ENCODE measurements at regions of chr3 and their contacts with region 1.

Region 1: DNA sequence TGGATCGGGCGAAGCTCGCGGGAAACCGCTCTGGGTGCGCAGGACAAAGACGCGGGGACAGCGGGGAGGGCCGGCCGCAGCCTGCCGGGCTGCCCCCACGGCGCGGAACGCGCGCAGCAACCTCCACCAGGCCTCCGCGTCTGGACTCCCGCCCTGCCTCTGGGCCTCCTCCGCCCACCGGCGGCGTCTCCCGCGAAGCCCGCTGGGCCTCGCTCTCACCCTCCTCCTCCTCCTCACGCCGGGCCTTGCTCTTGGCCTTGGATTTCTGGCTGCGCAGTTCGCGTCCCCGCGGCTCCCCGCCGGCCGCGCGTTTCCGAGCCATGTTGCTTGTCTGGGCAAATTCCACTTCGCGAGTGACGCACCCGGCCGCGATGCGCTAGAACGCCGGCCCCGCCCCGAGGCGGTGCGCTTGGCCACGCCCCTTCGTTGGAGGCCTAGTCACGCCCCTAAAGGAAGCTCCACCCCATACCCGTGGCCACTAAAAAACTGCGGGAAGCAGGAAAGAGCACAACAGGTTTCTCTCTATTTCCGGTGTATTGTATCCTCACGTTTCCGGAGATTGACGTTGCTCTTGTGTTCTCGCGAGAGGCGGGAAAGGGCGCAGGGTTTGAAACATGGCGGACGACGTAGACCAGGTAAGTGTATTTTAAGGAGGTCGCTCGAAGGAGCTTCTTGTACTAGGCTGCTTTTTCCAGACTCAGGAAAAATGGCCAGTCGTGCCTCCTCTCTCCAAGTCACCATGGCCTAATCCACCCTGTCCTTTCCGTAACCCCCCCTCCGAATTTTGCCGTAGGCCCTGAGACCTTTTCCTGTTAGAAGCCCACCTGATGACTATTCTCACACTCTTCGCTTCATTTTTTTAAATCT is at the starts of genes LSM3 and XPC:
- DNase-seq: peak; percentile 98
- ATAC-seq: peak; percentile 93
- H3K4me3 Mint-ChIP-seq: peak within 1 kb of the TSS; percentile 79
- H3K27ac Mint-ChIP-seq: peak within 1 kb of the TSS; percentile 94
- H3K4me1 Mint-ChIP-seq: peaks cover 64% of the 10 kb centered on the region
- H3K27me3 Mint-ChIP-seq: no peaks in the 10 kb centered on the region
- total RNA-seq, gene LSM3: 23.0 to 30.2 TPM
- total RNA-seq, gene XPC: 24.3 to 24.7 TPM

Region 2: DNA sequence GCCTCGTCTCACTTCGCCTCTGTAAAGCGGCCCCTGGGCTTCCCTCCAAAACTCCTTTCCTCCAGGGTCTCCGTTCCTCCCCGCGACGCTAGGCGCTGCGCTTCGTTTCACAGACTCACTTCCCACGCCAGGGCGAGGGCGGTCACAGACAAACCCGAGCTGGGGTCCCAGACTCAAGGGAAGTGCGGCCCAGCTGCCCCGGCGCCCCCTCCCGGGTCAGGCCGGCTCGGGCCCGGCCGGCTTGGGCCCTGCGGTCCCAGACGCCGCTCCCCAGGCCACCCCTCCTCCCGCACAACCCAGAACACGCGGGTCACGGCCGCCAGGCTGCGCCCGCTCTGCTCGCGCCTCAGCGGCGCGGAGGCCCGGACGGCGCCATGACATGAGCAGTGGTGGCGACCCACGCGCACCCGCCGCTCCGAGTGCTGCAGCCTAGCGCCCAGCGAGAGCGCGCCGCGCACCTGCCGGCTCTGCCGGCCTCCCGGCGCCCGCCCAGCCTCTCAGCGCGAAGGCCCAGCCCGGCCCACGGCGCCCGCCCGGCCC is 758.9 kb before region 1 on chr3:
- CTCF ChIA-PET with region 1: no interaction called
- POLR2A ChIA-PET with region 1: no interaction called
- intact Hi-C with region 1: loop called in 1 of 2 experiments (anchors 10 kb)
- DNase-seq: peak; percentile 79
- ATAC-seq: peak; percentile 30
- H3K4me3 Mint-ChIP-seq: peak overlapping the region; percentile 77
- H3K27ac Mint-ChIP-seq: peak overlapping the region; percentile 95
- H3K4me1 Mint-ChIP-seq: peaks cover 58% of the 10 kb centered on the region
- H3K27me3 Mint-ChIP-seq: no peaks in the 10 kb centered on the region

Region 3: GRCh38 chr3:14124615-14125190 is 53.8 kb before region 1 on chr3 and contains the starts of genes CHCHD4 and TMEM43:
- CTCF ChIA-PET with region 1: interaction called, 5 read pairs
- POLR2A ChIA-PET with region 1: interaction called, 34 read pairs
- intact Hi-C with region 1: loop called (anchors 1 kb)
- DNase-seq: peak; percentile 99
- ATAC-seq: peak; percentile 91
- H3K4me3 Mint-ChIP-seq: peak within 1 kb of the TSS; percentile 96
- H3K27ac Mint-ChIP-seq: peak within 1 kb of the TSS; percentile 90
- H3K4me1 Mint-ChIP-seq: peaks cover 64% of the 10 kb centered on the region
- H3K27me3 Mint-ChIP-seq: no peaks in the 10 kb centered on the region
- total RNA-seq, gene CHCHD4: 23.3 TPM
- total RNA-seq, gene TMEM43: 28.3 to 28.5 TPM

Region 4: DNA sequence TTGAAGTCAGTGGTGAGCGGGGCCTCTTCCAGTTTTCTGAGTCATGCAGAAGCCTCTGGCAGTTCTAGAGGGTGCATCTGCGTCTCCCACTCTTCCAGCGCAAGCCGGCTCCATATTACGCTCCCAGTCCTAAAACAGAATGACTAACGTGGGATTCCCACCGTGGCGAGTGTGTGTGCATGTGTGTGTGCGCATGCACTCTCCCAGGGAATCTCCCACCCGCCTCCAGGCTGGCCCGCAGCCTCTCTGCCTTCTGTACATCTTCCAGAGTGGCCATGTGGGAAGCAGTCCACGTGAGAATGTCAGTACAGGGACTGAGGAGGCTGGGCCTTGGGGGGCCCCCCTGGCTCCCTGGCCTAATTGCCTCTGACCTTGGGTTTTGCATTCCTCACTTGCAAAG is 87.9 kb after region 1 on chr3:
- CTCF ChIA-PET with region 1: no interaction called
- POLR2A ChIA-PET with region 1: no interaction called
- intact Hi-C with region 1: no loop called
- DNase-seq: no peak
- ATAC-seq: no peak
- H3K4me3 Mint-ChIP-seq: no peak overlapping the region
- H3K27ac Mint-ChIP-seq: no peak overlapping the region
- H3K4me1 Mint-ChIP-seq: no peaks in the 10 kb centered on the region
- H3K27me3 Mint-ChIP-seq: peaks cover 2% of the 10 kb centered on the region

Region 5: DNA sequence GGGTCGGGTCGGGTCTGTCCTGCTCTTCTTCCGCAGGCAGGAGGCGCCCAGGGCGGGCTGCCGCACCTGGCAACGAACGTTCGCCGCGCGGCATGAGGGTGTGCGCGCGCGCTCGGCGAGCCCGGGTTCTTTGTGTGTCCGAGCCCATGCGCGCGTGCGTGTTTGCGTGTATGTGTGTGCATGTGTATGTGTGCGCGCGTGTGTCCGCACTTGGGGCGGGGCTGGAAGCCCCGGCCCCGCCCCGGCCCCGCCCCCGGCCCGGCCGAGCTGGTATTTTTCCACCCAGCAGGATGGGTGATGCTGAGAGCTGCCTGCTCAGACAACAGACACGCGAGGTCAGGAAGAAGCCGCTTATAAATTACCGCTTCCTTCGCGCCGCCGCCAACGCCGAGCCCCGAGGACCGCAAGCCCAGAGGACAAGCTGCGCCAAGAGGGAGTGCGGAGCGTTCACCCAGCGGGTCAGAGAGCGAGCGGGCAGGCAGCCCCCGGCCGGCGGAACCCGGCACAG is 223.9 kb after region 1 on chr3 and contains the start of gene SLC6A6:
- CTCF ChIA-PET with region 1: no interaction called
- POLR2A ChIA-PET with region 1: interaction called, 4 read pairs
- intact Hi-C with region 1: loop called in 1 of 2 experiments (anchors 1 kb)
- DNase-seq: peak; percentile 97
- ATAC-seq: peak; percentile 80
- H3K4me3 Mint-ChIP-seq: peak within 1 kb of the TSS; percentile 94
- H3K27ac Mint-ChIP-seq: peak within 1 kb of the TSS; percentile 95
- H3K4me1 Mint-ChIP-seq: peaks cover 43% of the 10 kb centered on the region
- H3K27me3 Mint-ChIP-seq: no peaks in the 10 kb centered on the region
- total RNA-seq, gene SLC6A6: 51.7 to 54.2 TPM

Region 6: DNA sequence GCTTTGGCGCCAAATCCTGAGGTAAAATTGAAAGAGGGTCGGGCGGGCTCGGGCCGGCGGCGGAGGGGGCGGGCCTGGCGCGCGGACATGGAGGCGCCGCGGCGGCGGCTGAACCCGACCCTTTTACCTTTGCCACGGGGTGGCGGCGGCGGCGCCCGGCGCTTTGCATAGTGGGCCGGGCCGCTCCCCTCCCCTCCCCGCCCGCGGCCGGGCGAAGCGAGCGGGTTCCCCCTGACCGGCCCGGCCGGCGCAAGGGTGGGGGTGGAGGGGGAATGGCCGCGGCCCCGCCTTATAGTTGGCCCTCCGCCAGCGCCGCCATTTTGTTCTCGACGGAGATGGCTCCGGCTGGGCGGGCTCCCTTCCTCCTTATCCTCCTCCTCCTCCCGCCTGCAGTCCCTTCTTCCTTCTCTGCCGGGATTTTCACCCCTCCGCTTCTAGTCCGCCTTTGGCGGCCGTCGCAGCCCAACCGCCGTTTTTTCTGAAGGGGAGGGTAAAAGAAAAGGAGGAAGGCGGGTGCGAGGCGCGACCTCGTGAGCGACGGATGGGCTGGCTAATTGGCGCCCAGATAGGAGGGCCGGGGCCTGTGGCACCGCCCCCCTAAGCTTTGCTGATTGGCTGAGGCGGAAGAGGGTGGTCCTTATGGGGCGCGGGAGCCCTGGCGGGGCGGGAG is 769.5 kb after region 1 on chr3:
- CTCF ChIA-PET with region 1: no interaction called
- POLR2A ChIA-PET with region 1: interaction called, 3 read pairs
- intact Hi-C with region 1: loop called (anchors 1 to 5 kb)
- DNase-seq: peak; percentile 97
- ATAC-seq: peak; percentile 97
- H3K4me3 Mint-ChIP-seq: peak overlapping the region; percentile 91
- H3K27ac Mint-ChIP-seq: peak overlapping the region; percentile 98
- H3K4me1 Mint-ChIP-seq: peaks cover 49% of the 10 kb centered on the region
- H3K27me3 Mint-ChIP-seq: no peaks in the 10 kb centered on the region